Naive thymus-derived CD4-positive, alpha-beta T cell (primary cell): ENCODE measurements at regions of chr1 and their contacts with region 1.

Region 1: DNA sequence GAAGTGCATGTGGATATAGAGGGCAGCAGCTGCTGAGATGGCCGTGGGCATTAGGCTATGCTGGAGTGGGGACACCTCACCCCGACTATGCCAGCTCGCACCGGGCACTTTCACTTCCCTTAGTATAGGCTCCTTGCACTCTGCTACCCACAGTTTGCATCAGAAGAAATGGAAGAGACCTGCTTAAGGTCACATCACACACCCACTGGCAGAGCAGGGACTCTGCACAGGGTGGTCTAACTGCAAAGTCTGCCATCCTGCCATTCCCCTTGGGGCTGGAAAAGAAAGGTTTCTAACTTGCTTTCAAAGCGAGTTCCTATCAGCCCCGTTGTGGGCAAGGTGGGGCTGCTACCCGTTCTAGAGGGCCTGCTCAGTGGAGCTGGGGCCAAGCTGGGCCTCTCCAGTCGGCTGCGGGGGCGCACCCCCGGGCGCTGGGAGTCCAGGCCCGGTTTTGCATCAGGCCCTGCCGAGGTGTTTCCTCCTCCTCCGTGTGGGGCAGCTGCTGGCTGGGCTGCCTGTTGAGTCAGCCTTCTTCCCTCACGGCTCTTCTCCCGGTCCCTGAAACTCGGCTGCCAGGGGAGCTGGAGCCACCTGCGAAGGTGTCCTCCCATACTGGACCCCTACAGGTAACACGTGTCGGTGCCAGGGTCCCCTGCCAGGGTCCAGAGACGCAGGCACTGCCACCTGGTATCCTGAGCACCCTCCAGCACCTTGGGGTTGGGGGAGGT is at the start of gene SYTL1:
- DNase-seq: peak; percentile 49 to 72 (median 60)
- ATAC-seq: peak; percentile 74
- H3K4me3 ChIP-seq: peak within 1 kb of the TSS; percentile 85
- H3K4me3 Mint-ChIP-seq: peak within 1 kb of the TSS; percentile 91 to 100 (median 96)
- H3K27ac ChIP-seq: peak within 1 kb of the TSS; percentile 87
- H3K27ac Mint-ChIP-seq: peak within 1 kb of the TSS; percentile 86 to 98 (median 94)
- H3K4me1 ChIP-seq: peaks cover 11 to 29% of the 10 kb centered on the region in 2 donors
- H3K4me1 Mint-ChIP-seq: peaks cover 22 to 68% (median 53%) of the 10 kb centered on the region in 7 donors
- H3K27me3 ChIP-seq: no peaks in the 10 kb centered on the region
- H3K27me3 Mint-ChIP-seq: no peaks in the 10 kb centered on the region
- total RNA-seq, gene SYTL1: 107 to 172 (median 136) TPM

Region 2: DNA sequence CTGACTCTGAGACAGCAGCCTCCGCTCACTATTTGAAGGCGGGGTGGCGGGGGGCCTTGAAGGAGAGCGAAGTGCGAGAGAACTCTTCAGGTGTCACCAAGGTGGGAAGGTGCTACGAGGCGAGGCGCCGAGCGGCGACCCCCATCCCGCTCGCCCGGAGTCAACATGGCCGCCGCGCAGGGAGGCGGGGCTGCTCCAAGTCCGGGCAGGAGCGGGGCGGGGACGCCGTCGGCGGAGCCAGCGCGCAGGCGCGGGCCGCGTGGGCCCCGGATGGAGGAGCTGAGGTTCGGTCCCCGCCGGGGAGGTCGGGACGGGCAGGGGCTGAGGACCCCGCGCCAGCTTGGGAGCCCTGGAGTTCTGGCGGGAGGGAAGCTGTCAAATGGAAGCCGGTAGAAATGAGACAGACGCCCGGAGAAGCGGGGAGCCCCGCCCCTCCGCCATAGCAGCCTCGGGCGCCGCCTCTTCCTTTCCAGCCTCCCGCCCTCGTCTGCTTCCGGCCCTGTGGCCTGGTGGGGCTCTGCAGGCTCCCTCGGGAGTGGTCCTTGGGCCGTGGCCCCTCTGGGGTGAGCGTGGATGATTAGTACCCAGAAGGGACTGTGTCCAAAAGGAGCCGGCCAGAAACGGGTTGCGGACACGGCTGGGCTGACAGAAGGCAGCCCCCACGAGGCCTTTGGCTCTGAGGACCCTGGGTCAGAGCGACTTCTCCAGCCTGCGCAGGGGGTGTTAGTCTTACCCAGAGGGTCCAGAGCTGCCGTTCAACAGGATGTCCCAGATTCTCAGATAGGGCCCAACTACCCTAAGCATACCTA is 553.8 kb before region 1 on chr1 and contains the start of gene PIGV:
- CTCF ChIA-PET with region 1: no interaction called
- POLR2A ChIA-PET with region 1: no interaction called
- intact Hi-C with region 1: no loop called
- DNase-seq: peak; percentile 81 to 95 (median 90)
- ATAC-seq: peak; percentile 84
- H3K4me3 ChIP-seq: peak within 1 kb of the TSS; percentile 91
- H3K4me3 Mint-ChIP-seq: peak within 1 kb of the TSS; percentile 81 to 99 (median 90)
- H3K27ac ChIP-seq: peak within 1 kb of the TSS; percentile 95
- H3K27ac Mint-ChIP-seq: peak within 1 kb of the TSS; percentile 87 to 100 (median 99)
- H3K4me1 ChIP-seq: peaks cover 41 to 42% of the 10 kb centered on the region in 2 donors
- H3K4me1 Mint-ChIP-seq: peaks cover 38 to 74% (median 69%) of the 10 kb centered on the region in 7 donors
- H3K27me3 ChIP-seq: no peaks in the 10 kb centered on the region
- H3K27me3 Mint-ChIP-seq: no peaks in the 10 kb centered on the region
- total RNA-seq, gene PIGV: 8.4 to 17.9 (median 16.7) TPM

Region 3: GRCh38 chr1:26874896-26875295 is 466.8 kb before region 1 on chr1:
- CTCF ChIA-PET with region 1: no interaction called
- POLR2A ChIA-PET with region 1: no interaction called
- intact Hi-C with region 1: no loop called
- DNase-seq: no peak
- ATAC-seq: no peak
- H3K4me3 ChIP-seq: no peak overlapping the region
- H3K4me3 Mint-ChIP-seq: no peak overlapping the region
- H3K27ac ChIP-seq: no peak overlapping the region
- H3K27ac Mint-ChIP-seq: no peak overlapping the region
- H3K4me1 ChIP-seq: no peaks in the 10 kb centered on the region
- H3K4me1 Mint-ChIP-seq: peaks cover 0 to 3% (median 0%) of the 10 kb centered on the region in 7 donors
- H3K27me3 ChIP-seq: no peaks in the 10 kb centered on the region
- H3K27me3 Mint-ChIP-seq: no peaks in the 10 kb centered on the region

Region 4: GRCh38 chr1:26921540-26922430 is 419.9 kb before region 1 on chr1 and contains the start of gene NUDC:
- CTCF ChIA-PET with region 1: no interaction called
- POLR2A ChIA-PET with region 1: no interaction called
- intact Hi-C with region 1: no loop called
- DNase-seq: peak; percentile 87 to 97 (median 95)
- ATAC-seq: peak; percentile 97
- H3K4me3 ChIP-seq: peak within 1 kb of the TSS; percentile 79
- H3K4me3 Mint-ChIP-seq: peak within 1 kb of the TSS; percentile 82 to 98 (median 94)
- H3K27ac ChIP-seq: peak within 1 kb of the TSS; percentile 88
- H3K27ac Mint-ChIP-seq: peak within 1 kb of the TSS; percentile 88 to 98 (median 96)
- H3K4me1 ChIP-seq: peaks cover 11 to 12% of the 10 kb centered on the region in 2 donors
- H3K4me1 Mint-ChIP-seq: peaks cover 12 to 46% (median 34%) of the 10 kb centered on the region in 7 donors
- H3K27me3 ChIP-seq: no peaks in the 10 kb centered on the region
- H3K27me3 Mint-ChIP-seq: no peaks in the 10 kb centered on the region
- total RNA-seq, gene NUDC: 36.5 to 69.0 (median 40.5) TPM

Region 5: DNA sequence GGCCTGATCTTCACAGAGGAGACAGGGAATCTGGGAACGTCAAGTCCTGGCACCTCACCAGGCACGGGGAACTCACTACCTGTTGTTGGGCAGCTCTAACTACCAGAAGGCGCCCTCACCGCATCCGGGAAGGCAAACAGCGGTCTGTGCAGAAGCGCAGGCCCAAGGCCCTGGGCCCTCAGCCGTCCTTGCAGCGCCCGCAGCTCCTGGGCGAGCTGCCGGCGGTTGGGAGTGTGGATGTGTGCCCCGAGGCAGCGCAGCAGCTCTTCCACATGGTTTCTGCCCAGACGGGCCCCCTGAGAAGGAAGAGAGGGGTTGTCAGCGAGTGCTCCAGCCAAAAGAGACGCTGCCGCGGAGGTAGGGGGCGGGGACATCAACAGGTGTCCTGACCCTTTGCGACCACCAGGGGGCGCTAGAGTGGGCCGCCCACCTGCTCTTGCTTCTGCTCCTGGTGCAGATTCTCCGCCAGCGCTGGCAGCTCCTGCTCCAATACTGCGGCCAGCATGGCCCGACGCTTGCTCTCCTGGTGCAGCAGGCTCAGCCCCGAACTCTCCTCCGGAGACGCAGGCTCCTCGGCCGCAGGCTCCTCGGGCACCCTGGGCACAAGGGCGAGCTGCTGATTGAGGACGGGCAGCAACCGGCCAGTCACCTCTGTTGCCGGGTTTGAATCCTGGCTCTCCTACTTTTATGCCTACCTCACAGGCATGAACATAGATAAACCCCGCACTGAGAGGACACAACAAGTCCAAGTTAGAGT is 15.8 kb after region 1 on chr1:
- CTCF ChIA-PET with region 1: interaction called, 23 read pairs
- POLR2A ChIA-PET with region 1: interaction called, 111 read pairs
- intact Hi-C with region 1: loop called (anchors 1 kb)
- DNase-seq: peak; percentile 76 to 89 (median 85)
- ATAC-seq: peak; percentile 94
- H3K4me3 ChIP-seq: peak overlapping the region; percentile 76
- H3K4me3 Mint-ChIP-seq: peak overlapping the region; percentile 74 to 88 (median 80)
- H3K27ac ChIP-seq: peak overlapping the region; percentile 70
- H3K27ac Mint-ChIP-seq: peak overlapping the region; percentile 62 to 90 (median 88)
- H3K4me1 ChIP-seq: peaks cover 37 to 41% of the 10 kb centered on the region in 2 donors
- H3K4me1 Mint-ChIP-seq: peaks cover 23 to 56% (median 45%) of the 10 kb centered on the region in 7 donors
- H3K27me3 ChIP-seq: no peaks in the 10 kb centered on the region
- H3K27me3 Mint-ChIP-seq: no peaks in the 10 kb centered on the region

Region 6: GRCh38 chr1:27365372-27366112 is 23.9 kb after region 1 on chr1:
- CTCF ChIA-PET with region 1: interaction called, 9 read pairs
- POLR2A ChIA-PET with region 1: interaction called, 6 read pairs
- intact Hi-C with region 1: loop called (anchors 1 to 2 kb)
- DNase-seq: peak; percentile 48 to 77 (median 67)
- ATAC-seq: peak; percentile 78
- H3K4me3 ChIP-seq: peak overlapping the region; percentile 61
- H3K4me3 Mint-ChIP-seq: peak overlapping the region; percentile 74 to 93 (median 88)
- H3K27ac ChIP-seq: peak overlapping the region; percentile 60
- H3K27ac Mint-ChIP-seq: peak overlapping the region; percentile 54 to 90 (median 73)
- H3K4me1 ChIP-seq: peaks cover 13 to 17% of the 10 kb centered on the region in 2 donors
- H3K4me1 Mint-ChIP-seq: peaks cover 21 to 55% (median 42%) of the 10 kb centered on the region in 7 donors
- H3K27me3 ChIP-seq: no peaks in the 10 kb centered on the region
- H3K27me3 Mint-ChIP-seq: no peaks in the 10 kb centered on the region